Activated CD4-positive, alpha-beta memory T cell treated with anti-CD3 and anti-CD28 coated beads, Interleukin-2, amount 10 ng/mL, durations not matched to agents 7 days and 5 days (primary cell): ENCODE measurements at regions of chr14 and their contacts with region 1.

Region 1: GRCh38 chr14:22986508-22987054 is 4.2 kb upstream of the AJUBA start:
- DNase-seq: peak; percentile 90
- H3K4me3 Mint-ChIP-seq: no peak overlapping the region
- H3K27ac Mint-ChIP-seq: no peak overlapping the region
- H3K4me1 Mint-ChIP-seq: peaks cover 2% of the 10 kb centered on the region
- H3K27me3 Mint-ChIP-seq: no peaks in the 10 kb centered on the region

Region 2: GRCh38 chr14:22822571-22823098 is 163.9 kb before region 1 on chr14:
- CTCF ChIA-PET with region 1: interaction called, 16 read pairs
- POLR2A ChIA-PET with region 1: interaction called, 3 read pairs
- DNase-seq: peak; percentile 71
- H3K4me3 Mint-ChIP-seq: peak overlapping the region; percentile 39
- H3K27ac Mint-ChIP-seq: no peak overlapping the region
- H3K4me1 Mint-ChIP-seq: peaks cover 36% of the 10 kb centered on the region
- H3K27me3 Mint-ChIP-seq: peaks cover 19% of the 10 kb centered on the region

Region 3: DNA sequence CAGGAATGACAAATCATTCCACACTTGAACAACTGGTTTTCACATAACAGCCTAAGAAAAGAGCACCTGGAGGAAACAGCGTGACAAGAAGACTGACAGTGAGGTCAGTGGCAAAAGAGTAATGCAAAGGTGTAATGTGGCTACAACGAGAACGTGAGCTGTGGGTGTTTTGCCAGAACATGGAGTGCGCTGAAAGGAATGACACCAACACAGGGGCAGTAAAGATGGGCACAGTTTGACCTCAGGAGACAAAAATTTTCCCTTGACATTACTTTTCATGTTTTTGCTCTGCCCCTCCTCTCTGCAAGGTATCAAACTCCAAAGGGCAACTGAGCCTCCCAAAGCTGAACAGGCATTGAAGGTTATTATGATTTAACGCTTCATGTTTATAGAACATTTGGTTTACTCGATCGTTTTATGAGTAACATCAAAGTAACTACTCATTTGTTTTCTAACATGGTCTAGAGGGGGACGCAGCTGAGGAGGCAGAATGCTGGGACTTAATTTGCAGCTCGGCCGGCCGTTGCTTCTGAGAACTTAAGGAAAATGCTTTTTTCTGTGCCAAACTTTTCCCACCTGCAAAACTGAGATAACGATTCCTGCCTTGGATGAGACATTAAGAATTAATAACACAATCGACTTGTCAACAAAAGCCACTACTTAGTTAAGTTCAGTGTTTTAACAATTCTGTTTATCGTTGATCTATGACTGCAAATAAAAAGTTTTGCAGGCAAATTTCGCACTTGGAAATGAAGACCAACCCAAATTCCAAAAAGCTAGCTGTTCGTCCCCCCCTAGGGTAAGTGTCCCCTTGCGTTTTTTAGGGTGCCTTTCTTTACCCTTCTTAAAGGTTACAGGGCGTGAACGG is 30.6 kb before region 1 on chr14:
- CTCF ChIA-PET with region 1: interaction called, 18 read pairs
- POLR2A ChIA-PET with region 1: interaction called, 10 read pairs
- DNase-seq: no peak
- H3K4me3 Mint-ChIP-seq: peak overlapping the region; percentile 91
- H3K27ac Mint-ChIP-seq: peak overlapping the region; percentile 79
- H3K4me1 Mint-ChIP-seq: peaks cover 30% of the 10 kb centered on the region
- H3K27me3 Mint-ChIP-seq: peaks cover 3% of the 10 kb centered on the region

Region 4: GRCh38 chr14:23000860-23001259 is 14.3 kb after region 1 on chr14:
- CTCF ChIA-PET with region 1: interaction called, 63 read pairs
- POLR2A ChIA-PET with region 1: interaction called, 48 read pairs
- DNase-seq: no peak
- H3K4me3 Mint-ChIP-seq: no peak overlapping the region
- H3K27ac Mint-ChIP-seq: no peak overlapping the region
- H3K4me1 Mint-ChIP-seq: peaks cover 7% of the 10 kb centered on the region
- H3K27me3 Mint-ChIP-seq: no peaks in the 10 kb centered on the region

Region 5: DNA sequence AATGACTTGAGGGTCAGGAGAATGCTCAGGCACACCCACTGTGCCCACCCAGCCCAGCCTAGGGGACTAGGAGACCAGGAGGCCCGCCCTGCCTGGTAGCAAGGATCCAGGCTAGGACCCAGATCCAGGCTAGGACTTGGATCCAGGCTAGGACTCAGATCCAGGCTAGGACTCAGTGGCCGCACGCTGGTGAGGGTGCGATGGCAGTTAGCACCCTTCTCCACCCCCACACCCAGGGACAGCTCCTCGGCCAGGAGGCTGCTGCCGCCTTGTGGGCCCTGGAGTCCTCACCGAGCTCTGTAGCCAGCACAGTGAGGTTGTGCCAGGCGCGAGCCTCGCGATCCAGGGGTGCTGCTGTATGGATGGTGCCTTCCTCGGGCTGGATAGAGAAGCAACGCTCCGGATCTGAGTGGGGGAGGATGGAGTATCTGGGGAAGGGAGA is 65.6 kb after region 1 on chr14:
- CTCF ChIA-PET with region 1: interaction called, 332 read pairs
- POLR2A ChIA-PET with region 1: interaction called, 37 read pairs
- DNase-seq: no peak
- H3K4me3 Mint-ChIP-seq: no peak overlapping the region
- H3K27ac Mint-ChIP-seq: no peak overlapping the region
- H3K4me1 Mint-ChIP-seq: peaks cover 11% of the 10 kb centered on the region
- H3K27me3 Mint-ChIP-seq: peaks cover 8% of the 10 kb centered on the region

Region 6: DNA sequence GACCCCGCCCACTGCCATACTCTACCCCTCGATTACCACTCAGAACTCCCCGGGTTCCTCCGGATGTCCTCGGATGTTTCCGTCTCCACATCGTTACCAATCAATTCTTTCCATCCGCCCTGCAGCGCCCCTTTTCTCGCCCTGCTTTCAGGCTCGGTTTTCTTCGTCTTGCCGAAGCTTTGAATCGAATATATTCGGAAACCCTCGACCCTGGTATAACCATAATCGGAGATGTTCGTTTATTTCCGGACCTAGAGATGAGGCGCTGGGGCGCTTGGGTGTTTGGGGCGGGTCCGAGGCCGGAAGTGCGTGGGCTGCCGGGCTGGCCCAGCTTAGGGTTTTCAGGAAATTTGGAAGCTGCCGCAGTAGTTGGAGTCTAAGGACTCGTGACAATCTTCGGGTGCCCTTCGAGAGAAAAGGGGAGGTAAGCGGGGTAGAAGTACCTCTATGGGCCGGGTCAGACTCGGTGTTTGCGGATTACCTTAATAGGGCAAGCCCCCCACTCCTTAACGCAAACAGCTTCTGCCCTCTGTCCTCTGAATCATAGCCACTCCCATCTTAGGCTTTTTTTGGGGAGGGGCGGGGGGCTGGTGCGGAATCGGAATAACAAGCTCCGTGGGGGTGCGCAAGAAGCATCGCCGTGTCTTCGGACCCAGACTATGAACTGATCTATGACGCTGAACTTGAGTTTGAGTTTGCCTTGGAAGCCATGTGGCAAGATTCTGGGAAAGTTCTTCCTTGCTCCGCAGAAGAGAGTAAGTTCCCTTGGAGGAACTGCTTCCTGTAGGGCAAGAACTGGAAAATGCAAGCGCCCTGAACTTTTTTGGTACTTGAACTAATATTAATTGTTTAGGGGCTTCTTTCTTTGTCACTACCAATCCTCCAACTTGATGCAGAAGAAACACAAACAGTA is 108.9 kb after region 1 on chr14 and contains the start of gene C14orf119:
- CTCF ChIA-PET with region 1: interaction called, 11 read pairs
- POLR2A ChIA-PET with region 1: interaction called, 4 read pairs
- DNase-seq: peak; percentile 100
- H3K4me3 Mint-ChIP-seq: no peak within 1 kb of the TSS
- H3K27ac Mint-ChIP-seq: no peak within 1 kb of the TSS
- H3K4me1 Mint-ChIP-seq: peaks cover 36% of the 10 kb centered on the region
- H3K27me3 Mint-ChIP-seq: no peaks in the 10 kb centered on the region
- total RNA-seq, gene C14orf119: 49.2 to 55.5 TPM